IMR-90 (cell line): ENCODE measurements at regions of chr19 and their contacts with region 1.

Region 1: DNA sequence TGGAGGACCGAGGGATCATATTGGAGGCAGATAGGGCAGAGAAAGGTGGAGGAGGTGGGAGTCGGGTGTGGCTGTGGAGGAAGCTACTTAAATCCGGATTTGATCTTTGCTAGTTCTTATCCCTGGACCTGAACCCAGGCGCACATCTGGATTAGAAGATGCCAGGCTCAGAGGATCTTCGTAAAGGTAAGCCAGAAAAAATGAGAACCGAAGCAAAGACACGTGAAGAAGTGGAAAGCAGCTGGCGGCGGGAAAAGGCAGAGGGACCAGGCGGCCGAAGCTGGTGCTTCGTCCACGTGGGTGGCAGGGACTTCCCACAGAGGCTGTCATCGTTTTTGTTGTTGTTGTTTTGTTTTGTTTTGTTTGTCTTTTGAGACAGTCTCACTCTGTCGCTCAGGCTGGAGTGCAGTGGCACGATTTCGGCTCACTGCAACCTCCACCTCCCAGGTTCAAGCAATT is at the start of gene DPRX:
- DNase-seq: no peak
- ATAC-seq: no peak
- H3K4me3 ChIP-seq: no peak within 1 kb of the TSS
- H3K27ac ChIP-seq: no peak within 1 kb of the TSS
- H3K4me1 ChIP-seq: no peaks in the 10 kb centered on the region
- H3K27me3 ChIP-seq: no peaks in the 10 kb centered on the region
- CTCF ChIP-seq: no peak
- POLR2A ChIP-seq: no peak
- RAD21 ChIP-seq: no peak
- total RNA-seq, gene DPRX: not detected in 2 replicates

Region 2: GRCh38 chr19:53597023-53597422 is 35.0 kb before region 1 on chr19:
- CTCF ChIA-PET with region 1: interaction called, 4 read pairs
- POLR2A ChIA-PET with region 1: interaction called, 16 read pairs
- dilution Hi-C with region 1: no loop called
- in situ Hi-C with region 1: no loop called
- intact Hi-C with region 1: no loop called
- DNase-seq: no peak
- ATAC-seq: no peak
- H3K4me3 ChIP-seq: no peak overlapping the region
- H3K27ac ChIP-seq: no peak overlapping the region
- H3K4me1 ChIP-seq: no peaks in the 10 kb centered on the region
- H3K27me3 ChIP-seq: no peaks in the 10 kb centered on the region
- CTCF ChIP-seq: no peak
- POLR2A ChIP-seq: no peak
- RAD21 ChIP-seq: no peak

Region 3: DNA sequence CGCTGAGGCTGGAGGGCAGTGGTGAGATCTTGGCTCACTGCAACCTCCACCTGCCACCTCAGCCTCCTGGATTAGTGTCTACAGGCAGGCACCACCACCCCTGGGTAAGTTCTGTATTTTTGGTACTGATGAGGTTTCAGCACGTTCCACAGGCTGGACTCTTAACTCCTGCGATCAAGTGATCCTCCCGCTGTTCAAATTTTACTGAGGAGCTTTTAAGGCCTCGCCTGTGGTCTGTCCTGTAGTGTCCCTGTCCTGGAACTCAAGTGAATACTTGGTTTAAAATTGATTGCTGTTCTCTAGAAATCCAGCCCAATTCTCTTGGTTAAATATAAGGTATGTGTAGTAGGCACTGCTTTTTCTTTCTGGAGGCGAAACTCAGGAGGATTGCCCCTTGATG is 65.0 kb after region 1 on chr19:
- CTCF ChIA-PET with region 1: no interaction called
- POLR2A ChIA-PET with region 1: no interaction called
- dilution Hi-C with region 1: no loop called
- in situ Hi-C with region 1: no loop called
- intact Hi-C with region 1: no loop called
- DNase-seq: no peak
- ATAC-seq: no peak
- H3K4me3 ChIP-seq: no peak overlapping the region
- H3K27ac ChIP-seq: no peak overlapping the region
- H3K4me1 ChIP-seq: no peaks in the 10 kb centered on the region
- H3K27me3 ChIP-seq: no peaks in the 10 kb centered on the region
- CTCF ChIP-seq: no peak
- POLR2A ChIP-seq: no peak
- RAD21 ChIP-seq: no peak